CD14-positive monocyte (primary cell): ENCODE measurements at regions of chr11 and their contacts with region 1.

Region 1: GRCh38 chr11:69296890-69297786 is 3.2 kb downstream of the MYEOV start:
- DNase-seq: peak; percentile 93 to 98 (median 96)
- H3K4me3 ChIP-seq: peak overlapping the region in 2 of 3 experiments; percentile 22 to 61
- H3K4me3 Mint-ChIP-seq: peak overlapping the region; percentile 78 to 91
- H3K27ac ChIP-seq: peak overlapping the region; percentile 82 to 91
- H3K27ac Mint-ChIP-seq: peak overlapping the region; percentile 94 to 100 (median 99)
- H3K4me1 ChIP-seq: peaks cover 64 to 73% of the 10 kb centered on the region in 2 donors
- H3K4me1 Mint-ChIP-seq: peaks cover 80% of the 10 kb centered on the region
- H3K27me3 ChIP-seq: peaks cover 0 to 20% of the 10 kb centered on the region in 2 donors
- H3K27me3 Mint-ChIP-seq: peaks cover 27 to 49% (median 39%) of the 10 kb centered on the region in 3 donors
- CTCF ChIP-seq: no peak

Region 2: DNA sequence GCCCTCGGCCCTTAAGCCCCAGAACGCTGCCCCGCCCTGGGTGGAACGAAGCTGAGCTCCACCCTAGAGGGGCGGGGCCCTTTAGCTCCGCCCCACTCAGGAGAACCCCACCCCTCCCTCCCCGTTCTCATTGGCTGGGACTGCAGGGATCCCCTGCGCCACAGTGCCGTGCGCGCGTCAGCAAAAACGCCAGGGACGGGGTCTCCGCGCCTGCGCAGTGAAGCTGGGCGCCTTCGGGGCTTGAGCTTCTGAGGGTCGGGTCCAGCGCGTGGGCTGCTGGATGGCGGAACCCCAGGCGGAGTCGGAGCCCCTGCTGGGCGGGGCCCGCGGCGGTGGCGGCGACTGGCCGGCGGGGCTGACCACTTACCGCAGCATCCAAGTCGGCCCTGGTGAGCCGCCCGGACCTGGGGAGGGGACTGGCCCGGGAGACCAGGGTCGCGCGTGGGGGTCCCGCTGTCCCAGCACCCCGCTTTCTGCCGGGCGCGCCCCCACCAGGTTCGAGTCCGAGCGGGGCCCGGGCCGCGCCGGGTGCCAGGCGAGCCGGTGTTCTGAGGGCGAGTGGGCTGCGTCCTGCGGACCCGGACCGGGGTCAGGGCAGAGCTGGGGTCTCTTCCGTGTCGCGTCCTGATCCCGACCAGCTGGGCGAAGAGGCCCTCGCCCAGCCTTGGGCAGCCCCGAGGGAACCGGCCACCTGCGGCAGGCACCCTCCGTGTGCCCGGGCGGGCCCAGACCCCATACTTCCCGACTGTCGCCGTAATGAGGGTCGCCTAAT is 248.2 kb before region 1 on chr11 and contains the start of gene TPCN2:
- intact Hi-C with region 1: loop called in 1 of 2 experiments (anchors 10 kb)
- DNase-seq: peak; percentile 92 to 97 (median 96)
- H3K4me3 ChIP-seq: peak within 1 kb of the TSS; percentile 79 to 93 (median 85)
- H3K4me3 Mint-ChIP-seq: peak within 1 kb of the TSS; percentile 81 to 88
- H3K27ac ChIP-seq: peak within 1 kb of the TSS; percentile 79 to 98
- H3K27ac Mint-ChIP-seq: peak within 1 kb of the TSS; percentile 89 to 96 (median 94)
- H3K4me1 ChIP-seq: peaks cover 56 to 75% of the 10 kb centered on the region in 2 donors
- H3K4me1 Mint-ChIP-seq: peaks cover 72% of the 10 kb centered on the region
- H3K27me3 ChIP-seq: no peaks in the 10 kb centered on the region
- H3K27me3 Mint-ChIP-seq: peaks cover 0 to 5% (median 2%) of the 10 kb centered on the region in 3 donors
- CTCF ChIP-seq: no peak
- polyA plus RNA-seq, gene TPCN2: 29.3 to 52.8 (median 31.5) TPM

Region 3: GRCh38 chr11:69321877-69322361 is 24.8 kb after region 1 on chr11:
- intact Hi-C with region 1: no loop called
- DNase-seq: no peak
- H3K4me3 ChIP-seq: no peak overlapping the region
- H3K4me3 Mint-ChIP-seq: no peak overlapping the region
- H3K27ac ChIP-seq: no peak overlapping the region
- H3K27ac Mint-ChIP-seq: no peak overlapping the region
- H3K4me1 ChIP-seq: peaks cover 3 to 13% of the 10 kb centered on the region in 2 donors
- H3K4me1 Mint-ChIP-seq: peaks cover 11% of the 10 kb centered on the region
- H3K27me3 ChIP-seq: peaks cover 0 to 3% of the 10 kb centered on the region in 2 donors
- H3K27me3 Mint-ChIP-seq: peaks cover 2 to 18% (median 3%) of the 10 kb centered on the region in 3 donors
- CTCF ChIP-seq: no peak

Region 4: DNA sequence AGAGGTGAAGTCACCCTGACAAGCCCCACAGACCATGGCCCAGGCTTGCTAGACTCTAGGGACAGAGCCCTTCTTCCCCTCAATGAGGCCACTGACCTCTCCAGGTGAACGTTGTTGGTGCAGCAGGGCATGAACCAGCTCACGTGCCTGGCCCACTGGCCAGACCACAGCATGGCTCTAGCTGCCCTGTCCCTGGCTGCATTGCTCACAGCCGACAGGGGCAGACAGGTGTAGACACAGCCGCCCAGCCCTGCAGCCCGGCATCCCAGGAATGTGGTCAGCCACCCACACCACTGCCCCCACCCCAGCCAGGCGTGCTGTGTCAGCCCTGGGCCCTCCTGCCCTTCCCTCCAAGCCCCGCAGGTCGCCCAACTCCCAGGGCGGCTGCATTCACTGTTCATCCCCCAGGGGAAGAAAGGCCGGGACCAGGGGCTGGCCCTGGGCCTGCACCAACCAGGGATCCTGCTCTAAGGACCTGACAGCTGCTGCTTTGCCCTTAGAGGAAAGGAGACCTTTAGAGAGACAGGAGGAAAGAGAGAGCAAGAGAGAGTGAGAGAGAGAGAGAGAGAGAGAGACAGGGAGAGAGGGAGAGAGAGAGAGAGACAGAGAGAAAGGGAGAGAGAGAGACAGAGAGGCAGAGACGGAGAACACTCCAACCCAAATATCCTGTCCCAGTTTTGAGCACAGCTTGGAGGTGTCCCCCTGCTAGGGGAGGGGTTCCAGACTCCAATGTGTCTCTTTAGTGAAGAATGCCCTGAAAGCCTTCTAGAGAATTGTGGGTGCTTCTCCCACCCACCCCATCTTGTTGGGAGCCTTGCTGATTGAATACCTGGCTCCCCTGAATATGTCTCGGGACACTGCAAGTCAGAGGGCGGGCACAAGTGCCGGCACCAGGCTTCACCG is 140.1 kb after region 1 on chr11:
- intact Hi-C with region 1: loop called in 1 of 2 experiments (anchors 5 kb)
- DNase-seq: no peak
- H3K4me3 ChIP-seq: no peak overlapping the region
- H3K4me3 Mint-ChIP-seq: no peak overlapping the region
- H3K27ac ChIP-seq: no peak overlapping the region
- H3K27ac Mint-ChIP-seq: peak overlapping the region in 1 of 7 donors; percentile 26
- H3K4me1 ChIP-seq: peaks cover 16 to 21% of the 10 kb centered on the region in 2 donors
- H3K4me1 Mint-ChIP-seq: peaks cover 20% of the 10 kb centered on the region
- H3K27me3 ChIP-seq: peaks cover 0 to 8% of the 10 kb centered on the region in 2 donors
- H3K27me3 Mint-ChIP-seq: peaks cover 20 to 36% (median 27%) of the 10 kb centered on the region in 3 donors
- CTCF ChIP-seq: no peak

Region 5: DNA sequence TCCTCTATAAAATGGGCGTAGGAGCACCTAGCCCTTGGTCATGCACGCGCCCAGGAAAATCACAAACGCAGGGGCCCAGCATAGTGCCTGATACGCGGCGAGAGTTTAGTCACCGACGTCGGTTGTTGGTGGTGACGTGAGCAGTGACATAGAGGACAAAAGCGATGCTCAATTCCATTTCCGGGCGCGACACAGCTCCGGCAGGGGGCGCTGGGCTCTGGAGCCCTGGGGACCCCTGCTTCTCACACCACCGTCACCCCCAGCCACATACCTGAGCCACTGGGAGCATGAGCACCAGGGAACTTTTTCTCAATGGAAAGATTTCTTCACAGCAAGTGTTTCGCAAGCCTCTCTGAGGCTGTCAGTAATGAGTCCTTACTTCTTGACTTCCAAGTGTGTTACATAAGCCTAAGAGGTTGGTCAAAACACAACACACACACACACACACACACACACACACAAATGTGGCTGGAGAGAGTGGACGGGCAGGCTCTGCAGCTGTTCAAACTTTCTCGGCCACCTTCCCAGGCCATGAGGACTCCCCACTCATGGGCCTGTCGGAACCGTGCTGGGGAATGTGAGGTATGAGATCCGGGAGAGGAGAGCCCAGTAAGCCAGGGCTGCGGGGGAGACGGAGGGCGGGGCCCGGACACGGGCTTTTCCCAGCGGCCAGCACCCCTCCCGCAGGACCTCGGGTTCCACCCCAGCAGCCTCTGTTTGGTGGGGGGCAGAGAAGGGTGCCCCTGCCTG is 147.4 kb after region 1 on chr11:
- intact Hi-C with region 1: loop called (anchors 2 to 5 kb)
- DNase-seq: peak; percentile 53 to 80 (median 78)
- H3K4me3 ChIP-seq: peak overlapping the region in 1 of 3 experiments; percentile 55
- H3K4me3 Mint-ChIP-seq: peak overlapping the region; percentile 59 to 83
- H3K27ac ChIP-seq: no peak overlapping the region
- H3K27ac Mint-ChIP-seq: peak overlapping the region; percentile 21 to 83 (median 70)
- H3K4me1 ChIP-seq: peaks cover 41 to 51% of the 10 kb centered on the region in 2 donors
- H3K4me1 Mint-ChIP-seq: peaks cover 50% of the 10 kb centered on the region
- H3K27me3 ChIP-seq: peaks cover 0 to 30% of the 10 kb centered on the region in 2 donors
- H3K27me3 Mint-ChIP-seq: peaks cover 49 to 75% (median 68%) of the 10 kb centered on the region in 3 donors
- CTCF ChIP-seq: no peak

Region 6: DNA sequence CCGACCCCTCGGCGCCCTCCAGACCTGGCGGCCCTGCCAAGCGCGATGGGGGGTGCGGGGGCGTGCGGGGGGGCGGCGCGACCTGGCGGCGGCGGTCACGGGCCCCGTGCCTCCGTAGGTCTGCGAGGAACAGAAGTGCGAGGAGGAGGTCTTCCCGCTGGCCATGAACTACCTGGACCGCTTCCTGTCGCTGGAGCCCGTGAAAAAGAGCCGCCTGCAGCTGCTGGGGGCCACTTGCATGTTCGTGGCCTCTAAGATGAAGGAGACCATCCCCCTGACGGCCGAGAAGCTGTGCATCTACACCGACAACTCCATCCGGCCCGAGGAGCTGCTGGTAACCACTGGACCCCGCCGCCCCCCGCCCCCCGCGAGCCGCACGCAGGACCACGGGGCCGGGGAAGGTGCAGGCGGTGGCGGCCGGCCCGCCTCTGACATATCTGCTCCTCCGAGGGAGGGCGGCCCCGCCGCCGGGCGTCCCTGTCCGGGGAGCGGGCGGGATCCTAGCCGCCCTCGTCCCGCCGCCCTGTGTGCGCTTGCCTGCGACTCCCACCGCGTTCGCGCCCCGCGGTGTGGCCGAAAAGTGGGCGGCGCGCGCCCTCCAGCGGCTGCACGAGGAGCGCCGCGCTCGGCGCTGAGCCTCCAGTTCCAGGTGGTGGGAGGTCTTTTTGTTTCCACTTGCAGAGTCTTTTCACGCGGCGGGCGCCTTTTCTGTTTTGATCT is 345.9 kb after region 1 on chr11:
- intact Hi-C with region 1: loop called (anchors 2 to 5 kb)
- DNase-seq: peak; percentile 51 to 63 (median 57)
- H3K4me3 ChIP-seq: peak overlapping the region; percentile 51 to 87 (median 53)
- H3K4me3 Mint-ChIP-seq: peak overlapping the region; percentile 77 to 84
- H3K27ac ChIP-seq: no peak overlapping the region
- H3K27ac Mint-ChIP-seq: no peak overlapping the region
- H3K4me1 ChIP-seq: peaks cover 31 to 41% of the 10 kb centered on the region in 2 donors
- H3K4me1 Mint-ChIP-seq: peaks cover 23% of the 10 kb centered on the region
- H3K27me3 ChIP-seq: peaks cover 25 to 55% of the 10 kb centered on the region in 2 donors
- H3K27me3 Mint-ChIP-seq: peaks cover 45 to 69% (median 45%) of the 10 kb centered on the region in 3 donors
- CTCF ChIP-seq: peak; percentile 97

Region 7: DNA sequence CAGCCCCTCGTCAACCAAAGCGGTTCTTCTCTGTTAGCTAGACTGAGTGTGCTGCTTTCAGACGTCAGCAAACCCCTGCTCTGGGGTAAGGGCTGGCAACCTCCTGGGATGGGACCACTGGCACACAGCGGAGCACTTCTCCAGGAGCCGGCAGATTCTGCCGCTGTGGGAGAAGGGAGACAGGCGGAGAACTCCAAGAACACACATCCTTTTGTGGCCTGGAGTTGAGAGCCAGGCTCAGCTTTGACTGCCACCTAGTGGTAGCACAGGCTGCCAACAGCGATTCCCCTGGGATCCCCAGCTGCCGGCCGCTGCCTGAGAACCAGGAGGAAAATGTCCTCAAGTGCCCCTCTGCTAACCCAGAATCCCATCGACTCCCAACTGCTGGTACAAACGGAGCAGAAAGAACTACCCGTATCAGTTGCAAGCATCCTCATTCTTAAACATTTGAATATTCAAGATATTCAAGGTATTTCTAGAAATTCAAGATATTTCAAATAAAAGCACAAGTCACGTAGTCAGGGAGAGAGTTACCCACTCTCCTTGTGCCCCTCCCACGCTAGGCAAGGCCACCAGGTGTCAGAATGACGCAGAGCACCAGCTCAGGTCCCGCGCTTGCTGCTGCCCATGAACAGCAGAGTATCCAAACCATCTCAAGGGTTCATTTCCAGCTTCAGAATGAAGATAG is 373.2 kb after region 1 on chr11:
- intact Hi-C with region 1: loop called (anchors 2 to 10 kb)
- DNase-seq: peak; percentile 42 to 63 (median 56)
- H3K4me3 ChIP-seq: no peak overlapping the region
- H3K4me3 Mint-ChIP-seq: no peak overlapping the region
- H3K27ac ChIP-seq: no peak overlapping the region
- H3K27ac Mint-ChIP-seq: peak overlapping the region in 1 of 7 donors; percentile 55
- H3K4me1 ChIP-seq: peaks cover 9 to 19% of the 10 kb centered on the region in 2 donors
- H3K4me1 Mint-ChIP-seq: peaks cover 21% of the 10 kb centered on the region
- H3K27me3 ChIP-seq: no peaks in the 10 kb centered on the region
- H3K27me3 Mint-ChIP-seq: no peaks in the 10 kb centered on the region
- CTCF ChIP-seq: peak; percentile 94

Region 8: GRCh38 chr11:70202898-70203748 is 906.0 kb after region 1 on chr11 and contains the start of gene FADD:
- intact Hi-C with region 1: loop called in 1 of 2 experiments (anchors 5 kb)
- DNase-seq: peak; percentile 92 to 97 (median 92)
- H3K4me3 ChIP-seq: peak within 1 kb of the TSS; percentile 81 to 94 (median 83)
- H3K4me3 Mint-ChIP-seq: peak within 1 kb of the TSS; percentile 89 to 96
- H3K27ac ChIP-seq: peak within 1 kb of the TSS; percentile 86 to 95
- H3K27ac Mint-ChIP-seq: peak within 1 kb of the TSS; percentile 94 to 99 (median 96)
- H3K4me1 ChIP-seq: peaks cover 26 to 36% of the 10 kb centered on the region in 2 donors
- H3K4me1 Mint-ChIP-seq: peaks cover 40% of the 10 kb centered on the region
- H3K27me3 ChIP-seq: peaks cover 0 to 2% of the 10 kb centered on the region in 2 donors
- H3K27me3 Mint-ChIP-seq: peaks cover 11 to 21% (median 11%) of the 10 kb centered on the region in 3 donors
- CTCF ChIP-seq: no peak
- polyA plus RNA-seq, gene FADD: 5.4 to 9.5 (median 7.7) TPM